PC-3 (cell line): ENCODE measurements at regions of chr4 and their contacts with region 1.

Region 1: GRCh38 chr4:142405021-142405694 is 440.9 kb downstream of the INPP4B start:
- DNase-seq: peak; percentile 69
- ATAC-seq: peak; percentile 16
- H3K4me3 ChIP-seq: peak overlapping the region; percentile 64
- H3K27ac ChIP-seq: peak overlapping the region; percentile 97
- H3K4me1 ChIP-seq: peaks cover 56% of the 10 kb centered on the region
- H3K27me3 ChIP-seq: no peaks in the 10 kb centered on the region
- CTCF ChIP-seq: no peak

Region 2: DNA sequence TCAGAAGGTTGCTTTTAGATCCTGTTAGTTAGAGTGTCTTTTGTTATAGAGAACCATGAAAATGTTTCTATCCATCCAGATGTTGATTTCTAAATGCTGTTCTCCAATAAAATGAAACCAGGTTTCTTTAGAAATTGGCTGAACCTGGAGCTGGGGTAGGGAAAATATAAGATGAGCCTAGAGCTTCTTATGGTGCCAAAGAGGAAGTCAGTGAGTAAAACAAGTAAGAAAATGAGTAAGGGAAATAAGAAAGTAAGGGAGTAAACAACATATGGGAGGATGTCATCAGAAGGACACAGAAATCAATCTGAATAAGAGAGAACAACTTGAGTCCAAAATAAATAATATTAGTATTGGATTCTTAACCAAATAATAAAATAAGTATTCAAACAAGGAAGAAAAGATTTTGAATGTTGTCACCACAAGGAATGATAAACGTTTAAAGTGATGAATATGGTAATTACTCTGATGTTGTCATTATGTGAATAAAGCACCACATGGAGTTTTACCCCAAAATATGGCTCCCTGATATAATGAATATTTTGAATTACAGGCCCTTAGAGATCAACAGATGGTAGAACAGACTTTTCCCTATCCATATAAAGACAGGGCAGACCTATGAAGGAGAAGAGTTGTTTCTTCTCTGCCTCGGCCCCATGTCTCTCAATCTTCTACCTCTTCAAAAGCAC is 262.6 kb before region 1 on chr4:
- CTCF ChIA-PET with region 1: no interaction called
- POLR2A ChIA-PET with region 1: no interaction called
- intact Hi-C with region 1: loop called (anchors 10 kb)
- DNase-seq: peak; percentile 31
- ATAC-seq: peak; percentile 32; the same call in 1 of the 2 replicates
- H3K4me3 ChIP-seq: no peak overlapping the region
- H3K27ac ChIP-seq: peak overlapping the region; percentile 20
- H3K4me1 ChIP-seq: peaks cover 39% of the 10 kb centered on the region
- H3K27me3 ChIP-seq: no peaks in the 10 kb centered on the region
- CTCF ChIP-seq: no peak

Region 3: GRCh38 chr4:142331646-142332045 is 73.5 kb before region 1 on chr4:
- CTCF ChIA-PET with region 1: no interaction called
- POLR2A ChIA-PET with region 1: no interaction called
- intact Hi-C with region 1: no loop called
- DNase-seq: no peak
- ATAC-seq: no peak
- H3K4me3 ChIP-seq: no peak overlapping the region
- H3K27ac ChIP-seq: no peak overlapping the region
- H3K4me1 ChIP-seq: no peaks in the 10 kb centered on the region
- H3K27me3 ChIP-seq: no peaks in the 10 kb centered on the region
- CTCF ChIP-seq: no peak

Region 4: GRCh38 chr4:142379277-142380057 is 25.7 kb before region 1 on chr4:
- CTCF ChIA-PET with region 1: no interaction called
- POLR2A ChIA-PET with region 1: interaction called, 3 read pairs
- intact Hi-C with region 1: loop called (anchors 1 kb)
- DNase-seq: peak; percentile 82
- ATAC-seq: peak; percentile 88
- H3K4me3 ChIP-seq: no peak overlapping the region
- H3K27ac ChIP-seq: peak overlapping the region; percentile 50
- H3K4me1 ChIP-seq: peaks cover 35% of the 10 kb centered on the region
- H3K27me3 ChIP-seq: no peaks in the 10 kb centered on the region
- CTCF ChIP-seq: no peak

Region 5: DNA sequence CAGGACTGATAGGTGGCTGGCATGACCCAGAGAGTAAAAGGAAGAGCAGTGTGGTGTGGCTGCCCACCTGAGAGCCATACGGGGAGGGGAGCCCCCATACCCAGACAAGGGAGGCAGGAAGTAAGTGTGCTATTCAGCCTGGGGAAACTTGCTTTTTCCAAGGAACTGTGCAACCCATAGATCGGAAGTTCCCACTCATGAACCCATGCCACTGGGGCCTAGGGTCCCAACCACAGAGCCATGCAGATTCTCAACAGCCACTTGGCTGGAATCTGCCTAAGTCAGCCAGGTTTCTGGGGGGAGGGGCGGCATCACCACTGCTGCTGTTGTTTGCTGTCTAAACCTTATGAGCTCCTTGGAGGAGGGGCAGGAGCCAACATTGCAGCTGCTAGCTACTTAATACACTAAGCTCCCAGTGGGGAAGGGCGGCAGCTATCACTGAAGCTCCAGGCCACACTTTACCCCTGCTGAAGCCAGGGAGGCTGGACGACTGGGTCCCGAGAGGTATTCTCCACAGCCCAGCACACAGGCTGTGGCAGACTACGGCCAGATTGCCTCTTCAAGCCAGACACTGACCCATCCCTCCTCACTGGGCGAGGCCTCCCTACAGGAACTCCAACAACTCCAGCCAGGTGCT is 30.6 kb after region 1 on chr4:
- CTCF ChIA-PET with region 1: no interaction called
- POLR2A ChIA-PET with region 1: no interaction called
- intact Hi-C with region 1: no loop called
- DNase-seq: no peak
- ATAC-seq: no peak
- H3K4me3 ChIP-seq: no peak overlapping the region
- H3K27ac ChIP-seq: no peak overlapping the region
- H3K4me1 ChIP-seq: peaks cover 5% of the 10 kb centered on the region
- H3K27me3 ChIP-seq: no peaks in the 10 kb centered on the region
- CTCF ChIP-seq: no peak

Region 6: DNA sequence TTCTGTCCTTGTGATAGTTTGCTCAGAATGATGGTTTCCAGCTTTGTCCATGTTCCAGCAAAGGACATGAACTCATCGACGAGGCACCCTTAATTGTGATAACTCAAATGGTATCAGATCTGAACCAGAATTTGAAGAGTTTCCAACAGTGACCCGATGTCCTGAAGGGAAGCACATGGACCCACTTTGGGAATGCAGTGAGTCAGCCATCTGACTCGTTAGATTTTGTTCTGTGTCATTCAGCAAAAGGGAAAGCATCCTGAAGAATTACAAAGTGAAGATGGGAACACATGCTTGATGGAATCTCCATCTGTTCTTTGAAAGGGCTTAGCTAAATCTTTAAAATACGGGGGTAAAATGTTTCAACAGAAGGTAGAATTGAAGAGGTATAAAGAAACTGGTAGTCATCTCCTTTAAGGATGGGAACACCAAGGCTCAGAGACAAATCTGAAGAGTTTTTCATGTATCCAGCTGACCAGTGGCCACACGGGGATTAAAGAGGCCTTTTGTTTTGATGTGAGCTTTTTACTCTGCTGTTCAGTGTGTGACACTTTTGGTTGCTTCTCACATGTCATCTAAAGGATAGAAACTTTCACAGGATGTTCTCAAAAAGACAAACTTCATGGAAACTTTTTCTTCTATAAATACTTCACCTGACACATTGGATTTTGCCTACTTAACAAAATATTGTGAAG is 47.1 kb after region 1 on chr4:
- CTCF ChIA-PET with region 1: no interaction called
- POLR2A ChIA-PET with region 1: no interaction called
- intact Hi-C with region 1: no loop called
- DNase-seq: peak; percentile 44
- ATAC-seq: no peak
- H3K4me3 ChIP-seq: no peak overlapping the region
- H3K27ac ChIP-seq: no peak overlapping the region
- H3K4me1 ChIP-seq: no peaks in the 10 kb centered on the region
- H3K27me3 ChIP-seq: no peaks in the 10 kb centered on the region
- CTCF ChIP-seq: no peak

Region 7: DNA sequence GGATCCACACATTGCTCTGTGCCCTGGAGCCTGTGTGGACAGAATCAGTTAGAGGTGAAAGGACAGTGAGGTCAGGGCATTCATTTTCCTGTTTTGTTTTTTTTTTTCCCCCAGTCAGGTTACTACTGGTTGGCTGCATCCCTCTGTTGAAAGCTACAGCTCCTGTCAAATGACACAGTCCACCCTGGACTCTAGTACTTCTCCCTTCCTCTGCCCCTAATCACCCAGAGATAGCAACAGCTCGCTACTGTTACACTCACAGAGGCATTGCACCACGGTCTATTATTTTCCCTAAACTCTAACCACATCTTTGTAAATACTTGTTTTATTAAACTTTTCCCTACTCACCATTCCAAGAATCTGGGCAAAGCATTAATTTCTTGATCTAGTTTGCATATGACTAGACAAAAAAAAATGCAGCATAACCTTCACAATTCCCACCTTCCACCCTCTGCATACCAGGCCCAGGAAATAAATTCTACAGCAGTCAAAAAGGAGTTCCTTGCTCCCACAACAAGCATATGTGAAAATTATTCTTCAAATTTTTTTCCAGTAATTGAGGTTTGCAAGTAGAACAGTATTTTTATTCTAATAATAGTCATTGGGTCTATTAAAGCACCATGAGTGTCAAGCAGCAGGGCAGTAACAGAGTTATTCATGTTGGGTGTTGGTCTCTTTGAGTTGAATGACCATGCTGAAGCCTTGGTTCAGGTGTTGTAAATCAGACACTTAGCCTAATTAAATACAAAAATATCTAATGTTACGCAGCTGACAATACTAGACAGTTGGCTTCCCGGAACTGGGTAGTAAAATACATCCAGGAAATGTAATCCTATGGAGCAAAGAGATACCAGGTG is 111.7 kb after region 1 on chr4:
- CTCF ChIA-PET with region 1: no interaction called
- POLR2A ChIA-PET with region 1: no interaction called
- intact Hi-C with region 1: loop called (anchors 2 kb)
- DNase-seq: peak; percentile 76
- ATAC-seq: peak; percentile 45
- H3K4me3 ChIP-seq: no peak overlapping the region
- H3K27ac ChIP-seq: peak overlapping the region; percentile 16
- H3K4me1 ChIP-seq: peaks cover 47% of the 10 kb centered on the region
- H3K27me3 ChIP-seq: no peaks in the 10 kb centered on the region
- CTCF ChIP-seq: no peak

Region 8: DNA sequence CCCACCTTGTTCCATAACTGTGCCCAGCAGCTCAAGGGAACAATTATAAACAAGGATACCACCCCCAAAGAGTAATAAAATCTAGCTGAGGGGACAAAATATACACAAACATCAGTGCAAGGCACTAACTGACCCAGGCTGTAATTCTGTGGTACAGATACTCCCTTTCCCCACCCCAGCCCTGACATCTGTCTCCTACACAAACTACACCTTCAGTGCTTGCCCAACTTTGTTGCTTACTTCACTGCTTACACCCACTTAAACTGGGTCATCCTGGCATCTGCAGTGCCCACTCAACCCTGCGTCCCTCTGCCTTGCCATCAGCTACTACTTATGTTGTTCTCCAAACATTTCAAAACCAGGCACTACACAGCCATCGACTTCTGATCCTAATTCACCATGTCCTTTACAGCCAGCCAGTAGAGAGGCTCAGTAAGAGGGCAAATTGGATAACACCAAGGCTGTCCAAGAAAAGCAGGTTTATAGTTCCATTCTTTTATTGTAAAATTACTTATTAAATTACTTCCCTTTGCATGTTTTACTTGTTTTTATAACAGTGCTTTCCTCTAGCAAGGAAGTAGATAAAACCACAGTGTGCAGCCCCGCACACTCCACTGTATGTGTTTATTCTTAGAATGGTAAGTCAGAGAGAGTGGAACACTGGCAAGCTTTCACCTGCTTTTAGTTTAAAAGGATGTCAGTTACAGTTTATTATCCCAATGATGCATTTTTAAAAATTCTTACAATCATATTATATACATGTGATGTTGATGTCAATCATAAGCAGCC is 291.4 kb after region 1 on chr4:
- CTCF ChIA-PET with region 1: no interaction called
- POLR2A ChIA-PET with region 1: no interaction called
- intact Hi-C with region 1: no loop called
- DNase-seq: no peak
- ATAC-seq: peak; percentile 63
- H3K4me3 ChIP-seq: no peak overlapping the region
- H3K27ac ChIP-seq: 0 out of 2 replicates have a peak overlapping the region, but pooled peaks have one; percentile 10
- H3K4me1 ChIP-seq: peaks cover 12% of the 10 kb centered on the region; the same call in 1 of the 2 replicates
- H3K27me3 ChIP-seq: no peaks in the 10 kb centered on the region
- CTCF ChIP-seq: no peak

Region 9: GRCh38 chr4:142719854-142720541 is 314.8 kb after region 1 on chr4:
- CTCF ChIA-PET with region 1: no interaction called
- POLR2A ChIA-PET with region 1: no interaction called
- intact Hi-C with region 1: loop called (anchors 1 kb)
- DNase-seq: peak; percentile 93
- ATAC-seq: peak; percentile 67
- H3K4me3 ChIP-seq: no peak overlapping the region
- H3K27ac ChIP-seq: peak overlapping the region; percentile 76
- H3K4me1 ChIP-seq: peaks cover 33% of the 10 kb centered on the region
- H3K27me3 ChIP-seq: no peaks in the 10 kb centered on the region
- CTCF ChIP-seq: peak; percentile 88